Caki2 (cell line): ENCODE measurements at regions of chr5 and their contacts with region 1.

Region 1: GRCh38 chr5:107365320-107366109 is 305.2 kb downstream of the EFNA5 start:
- DNase-seq: peak; percentile 86

Region 2: GRCh38 chr5:107169869-107170268 is 195.6 kb before region 1 on chr5:
- in situ Hi-C with region 1: loop called (anchors 10 kb)
- DNase-seq: no peak